ENCODE measurements at regions of chr20 and their contacts with region 1.

Region 1: GRCh38 chr20:36605399-36606157 is at the start of gene RAB5IF:
- DNase-seq: peak; percentile 99 to 100
- H3K4me3 ChIP-seq: peak within 1 kb of the TSS; percentile 73 to 98 (median 95)
- H3K27ac ChIP-seq: peak within 1 kb of the TSS; percentile 78; the same call in 1 of the 2 replicates
- H3K4me1 ChIP-seq: peaks cover 0 to 4% (median 2%) of the 10 kb centered on the region in 4 experiments; a peak in 3 of 7 replicates
- H3K27me3 ChIP-seq: no peaks in the 10 kb centered on the region; a peak in 1 of 7 replicates
- CTCF ChIP-seq: peak; percentile 92 to 99 (median 94)
- EP300 ChIP-seq: no peak; a peak in 1 of 3 replicates
- POLR2A ChIP-seq: peak; percentile 66 to 90
- RAD21 ChIP-seq: peak; percentile 77 to 79
- total RNA-seq, gene RAB5IF: 94.2 and 95.5 TPM in 2 replicates

Region 2: GRCh38 chr20:35988910-35989463 is 616.6 kb before region 1 on chr20:
- CTCF ChIA-PET with region 1: no interaction called
- POLR2A ChIA-PET with region 1: no interaction called
- DNase-seq: no peak
- H3K4me3 ChIP-seq: no peak overlapping the region
- H3K27ac ChIP-seq: no peak overlapping the region
- H3K4me1 ChIP-seq: no peaks in the 10 kb centered on the region; a peak in 1 of 7 replicates
- H3K27me3 ChIP-seq: no peaks in the 10 kb centered on the region
- CTCF ChIP-seq: no peak
- EP300 ChIP-seq: no peak
- POLR2A ChIP-seq: no peak
- RAD21 ChIP-seq: no peak

Region 3: GRCh38 chr20:36547841-36548300 is 57.7 kb before region 1 on chr20:
- CTCF ChIA-PET with region 1: interaction called, 19 read pairs
- POLR2A ChIA-PET with region 1: interaction called, 13 read pairs
- DNase-seq: peak in 1 of 2 experiments; percentile 85
- H3K4me3 ChIP-seq: no peak overlapping the region
- H3K27ac ChIP-seq: no peak overlapping the region
- H3K4me1 ChIP-seq: peaks cover 0 to 5% (median 2%) of the 10 kb centered on the region in 4 experiments; a peak in 5 of 7 replicates
- H3K27me3 ChIP-seq: no peaks in the 10 kb centered on the region
- CTCF ChIP-seq: peak; percentile 81 to 87 (median 84)
- EP300 ChIP-seq: no peak
- POLR2A ChIP-seq: no peak
- RAD21 ChIP-seq: peak; percentile 69 to 75

Region 4: GRCh38 chr20:36573103-36573794 is 32.3 kb before region 1 on chr20 and contains the start of gene TGIF2:
- CTCF ChIA-PET with region 1: interaction called, 13 read pairs
- POLR2A ChIA-PET with region 1: interaction called, 388 read pairs
- DNase-seq: peak; percentile 73 to 95
- H3K4me3 ChIP-seq: peak within 1 kb of the TSS; percentile 63 to 98 (median 78)
- H3K27ac ChIP-seq: peak within 1 kb of the TSS; percentile 85
- H3K4me1 ChIP-seq: peaks cover 14 to 31% (median 18%) of the 10 kb centered on the region in 4 experiments
- H3K27me3 ChIP-seq: no peaks in the 10 kb centered on the region
- CTCF ChIP-seq: no peak
- EP300 ChIP-seq: no peak; a peak in 1 of 3 replicates
- POLR2A ChIP-seq: peak in 1 of 2 experiments; percentile 38; a peak in 1 of 3 replicates
- RAD21 ChIP-seq: no peak
- total RNA-seq, gene TGIF2: 76.7 and 77.7 TPM in 2 replicates

Region 5: DNA sequence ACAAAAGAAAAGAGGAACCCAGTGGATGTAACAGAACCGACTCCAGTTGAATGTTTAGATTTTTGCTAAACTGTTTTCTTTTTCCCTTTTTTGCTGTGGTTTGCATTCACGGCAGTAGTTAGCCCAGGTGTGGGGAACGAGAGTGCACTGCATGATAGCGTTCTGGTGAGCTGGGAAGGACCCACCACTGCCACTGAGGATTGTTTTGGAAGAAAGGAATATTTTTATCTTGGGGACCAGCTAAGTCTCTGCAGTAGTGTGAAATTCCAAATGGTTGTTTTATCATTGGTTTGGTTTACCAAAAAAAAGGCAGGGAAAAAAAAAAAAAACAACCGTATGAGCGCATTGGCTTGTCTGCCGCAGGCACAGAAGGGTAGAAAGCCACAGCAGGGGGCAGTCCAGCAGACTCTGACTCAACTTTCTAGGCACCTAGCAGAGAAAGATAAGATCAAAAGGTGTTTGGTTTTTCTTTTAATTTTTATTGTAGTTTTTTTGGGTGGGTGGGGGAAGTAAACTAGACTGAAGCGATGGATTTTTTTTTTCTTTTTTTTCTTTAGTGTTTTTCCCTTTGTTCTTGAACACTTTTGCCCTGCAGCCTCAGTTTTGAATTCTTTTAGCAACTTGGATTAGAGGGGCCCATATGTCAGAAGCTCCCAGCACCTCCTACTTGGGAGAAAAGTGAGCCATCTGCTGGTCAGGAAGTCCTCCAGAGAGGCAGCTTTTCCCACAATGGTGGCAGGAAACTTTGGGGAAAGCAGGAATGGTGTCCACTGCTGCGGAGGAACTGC is 13.5 kb before region 1 on chr20:
- CTCF ChIA-PET with region 1: interaction called, 67 read pairs
- POLR2A ChIA-PET with region 1: interaction called, 71 read pairs
- DNase-seq: no peak
- H3K4me3 ChIP-seq: no peak overlapping the region
- H3K27ac ChIP-seq: no peak overlapping the region
- H3K4me1 ChIP-seq: peaks cover 0 to 8% (median 2%) of the 10 kb centered on the region in 4 experiments; a peak in 5 of 7 replicates
- H3K27me3 ChIP-seq: no peaks in the 10 kb centered on the region
- CTCF ChIP-seq: peak; percentile 49 to 65 (median 58)
- EP300 ChIP-seq: no peak
- POLR2A ChIP-seq: no peak
- RAD21 ChIP-seq: peak; percentile 51 to 65

Region 6: GRCh38 chr20:36754656-36755222 is 149.2 kb after region 1 on chr20:
- CTCF ChIA-PET with region 1: interaction called, 10 read pairs
- POLR2A ChIA-PET with region 1: no interaction called
- DNase-seq: peak in 1 of 2 experiments; percentile 60
- H3K4me3 ChIP-seq: no peak overlapping the region
- H3K27ac ChIP-seq: no peak overlapping the region; the same call in 1 of the 2 replicates
- H3K4me1 ChIP-seq: no peaks in the 10 kb centered on the region
- H3K27me3 ChIP-seq: no peaks in the 10 kb centered on the region
- CTCF ChIP-seq: peak in 2 of 3 experiments; percentile 79; a peak in 3 of 4 replicates
- EP300 ChIP-seq: no peak
- POLR2A ChIP-seq: no peak
- RAD21 ChIP-seq: peak; percentile 82

Region 7: DNA sequence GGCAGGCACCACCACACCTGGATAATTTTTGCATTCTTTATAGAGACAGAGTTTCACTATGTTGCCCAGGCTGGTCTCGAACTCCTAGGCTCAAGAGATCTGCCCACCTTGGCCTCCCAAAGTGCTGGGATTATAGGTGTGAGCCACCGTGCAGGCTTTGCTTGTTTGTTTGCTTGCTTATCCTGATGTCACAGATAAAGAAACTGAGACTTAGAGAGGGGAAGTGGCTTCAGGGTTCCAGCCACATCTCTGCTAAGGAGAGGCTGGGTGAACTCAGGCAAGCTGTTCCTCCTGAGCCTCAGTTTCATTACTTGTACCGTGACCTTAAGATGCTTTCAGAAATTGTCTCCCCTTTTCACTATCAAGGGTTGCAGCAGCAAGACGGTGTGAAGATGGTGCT is 221.9 kb after region 1 on chr20:
- CTCF ChIA-PET with region 1: no interaction called
- POLR2A ChIA-PET with region 1: no interaction called
- DNase-seq: no peak
- H3K4me3 ChIP-seq: no peak overlapping the region
- H3K27ac ChIP-seq: no peak overlapping the region
- H3K4me1 ChIP-seq: no peaks in the 10 kb centered on the region
- H3K27me3 ChIP-seq: no peaks in the 10 kb centered on the region
- CTCF ChIP-seq: no peak
- EP300 ChIP-seq: no peak
- POLR2A ChIP-seq: no peak
- RAD21 ChIP-seq: no peak

Measured in H1 (cell line).